SK-N-SH (cell line): ENCODE measurements at regions of chr2 and their contacts with region 1.

Region 1: GRCh38 chr2:30711646-30712085 is 95.6 kb downstream of the CAPN13 start:
- DNase-seq: peak; percentile 86
- H3K4me3 ChIP-seq: peak overlapping the region in 1 of 2 experiments; percentile 14; a peak in 1 of 4 replicates
- H3K27ac ChIP-seq: no peak overlapping the region
- H3K4me1 ChIP-seq: peaks cover 0 to 3% of the 10 kb centered on the region in 2 experiments; a peak in 1 of 4 replicates
- H3K27me3 ChIP-seq: no peaks in the 10 kb centered on the region
- CTCF ChIP-seq: peak; percentile 99
- EP300 ChIP-seq: no peak
- RAD21 ChIP-seq: peak; percentile 91

Region 2: GRCh38 chr2:30146438-30147147 is 565.1 kb before region 1 on chr2 and contains the start of gene YPEL5:
- CTCF ChIA-PET with region 1: interaction called, 18 read pairs
- POLR2A ChIA-PET with region 1: no interaction called
- DNase-seq: peak; percentile 99
- H3K4me3 ChIP-seq: peak within 1 kb of the TSS; percentile 82 to 99
- H3K27ac ChIP-seq: peak within 1 kb of the TSS; percentile 86 to 91
- H3K4me1 ChIP-seq: peaks cover 26 to 37% of the 10 kb centered on the region in 2 experiments; a peak in 3 of 4 replicates
- H3K27me3 ChIP-seq: no peaks in the 10 kb centered on the region
- CTCF ChIP-seq: no peak
- EP300 ChIP-seq: no peak
- RAD21 ChIP-seq: no peak
- polyA plus RNA-seq, gene YPEL5: 60.5 and 81.6 TPM in 2 replicates

Region 3: DNA sequence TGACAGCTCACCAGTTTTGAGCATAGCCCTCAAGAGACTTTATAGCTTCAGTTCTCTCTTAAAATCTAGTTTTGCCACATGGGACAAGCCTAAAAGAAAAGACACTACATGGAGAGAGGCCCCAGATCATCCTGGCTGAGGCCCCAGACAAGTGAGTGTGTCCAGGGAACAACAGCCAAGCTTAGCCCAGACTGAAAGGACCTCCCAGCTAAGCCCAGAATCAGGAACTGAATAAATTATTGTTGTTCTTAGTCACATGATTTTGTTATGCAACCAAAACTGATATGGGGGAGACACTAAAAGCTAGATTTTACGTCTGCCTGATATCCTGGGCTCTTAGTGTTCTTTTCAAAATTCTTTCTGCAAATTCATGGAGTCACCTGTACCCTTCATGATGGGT is 509.7 kb before region 1 on chr2:
- CTCF ChIA-PET with region 1: interaction called, 573 read pairs
- POLR2A ChIA-PET with region 1: no interaction called
- DNase-seq: no peak
- H3K4me3 ChIP-seq: no peak overlapping the region
- H3K27ac ChIP-seq: no peak overlapping the region
- H3K4me1 ChIP-seq: peaks cover 0 to 11% of the 10 kb centered on the region in 2 experiments; a peak in 2 of 4 replicates
- H3K27me3 ChIP-seq: no peaks in the 10 kb centered on the region; the same call in 1 of the 2 replicates
- CTCF ChIP-seq: no peak
- EP300 ChIP-seq: no peak
- RAD21 ChIP-seq: no peak

Region 4: GRCh38 chr2:30334762-30335363 is 376.8 kb before region 1 on chr2:
- CTCF ChIA-PET with region 1: interaction called, 30 read pairs
- POLR2A ChIA-PET with region 1: no interaction called
- DNase-seq: peak; percentile 42
- H3K4me3 ChIP-seq: no peak overlapping the region
- H3K27ac ChIP-seq: no peak overlapping the region
- H3K4me1 ChIP-seq: peaks cover 0 to 11% of the 10 kb centered on the region in 2 experiments; a peak in 1 of 4 replicates
- H3K27me3 ChIP-seq: no peaks in the 10 kb centered on the region
- CTCF ChIP-seq: no peak
- EP300 ChIP-seq: peak in 1 of 2 experiments; percentile 25; a peak in 1 of 4 replicates
- RAD21 ChIP-seq: peak; percentile 54

Region 5: DNA sequence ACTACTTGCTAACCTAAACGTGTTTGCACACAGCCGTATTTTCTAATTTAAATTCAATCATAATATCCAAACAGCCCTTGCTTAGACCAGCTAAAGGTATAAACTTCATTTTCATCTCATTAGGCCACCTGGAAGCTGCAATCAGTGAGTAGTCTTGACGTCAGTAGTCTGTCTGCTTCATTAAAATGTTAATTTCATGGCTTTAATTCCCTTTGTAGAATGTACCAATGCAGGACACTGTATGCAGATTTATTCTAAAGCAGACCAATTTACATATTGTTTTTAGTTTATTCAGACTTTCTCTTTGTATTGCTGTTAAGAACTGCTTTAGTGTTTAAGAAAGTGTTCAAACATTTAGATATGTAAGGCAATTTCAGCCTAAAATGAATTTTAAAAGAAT is 106.5 kb before region 1 on chr2:
- CTCF ChIA-PET with region 1: no interaction called
- POLR2A ChIA-PET with region 1: no interaction called
- DNase-seq: no peak
- H3K4me3 ChIP-seq: no peak overlapping the region
- H3K27ac ChIP-seq: no peak overlapping the region
- H3K4me1 ChIP-seq: peaks cover 0 to 6% of the 10 kb centered on the region in 2 experiments; a peak in 2 of 4 replicates
- H3K27me3 ChIP-seq: no peaks in the 10 kb centered on the region
- CTCF ChIP-seq: no peak
- EP300 ChIP-seq: no peak
- RAD21 ChIP-seq: no peak

Region 6: GRCh38 chr2:30641765-30642345 is 69.8 kb before region 1 on chr2:
- CTCF ChIA-PET with region 1: no interaction called
- POLR2A ChIA-PET with region 1: no interaction called
- DNase-seq: no peak
- H3K4me3 ChIP-seq: no peak overlapping the region
- H3K27ac ChIP-seq: no peak overlapping the region
- H3K4me1 ChIP-seq: no peaks in the 10 kb centered on the region; a peak in 1 of 4 replicates
- H3K27me3 ChIP-seq: no peaks in the 10 kb centered on the region
- CTCF ChIP-seq: no peak
- EP300 ChIP-seq: no peak
- RAD21 ChIP-seq: no peak

Region 7: GRCh38 chr2:30770816-30771576 is 59.3 kb after region 1 on chr2:
- CTCF ChIA-PET with region 1: interaction called, 13 read pairs
- POLR2A ChIA-PET with region 1: no interaction called
- DNase-seq: peak; percentile 79
- H3K4me3 ChIP-seq: no peak overlapping the region
- H3K27ac ChIP-seq: peak overlapping the region in 1 of 2 experiments; percentile 64; a peak in 2 of 4 replicates
- H3K4me1 ChIP-seq: peaks cover 0 to 38% of the 10 kb centered on the region in 2 experiments; a peak in 2 of 4 replicates
- H3K27me3 ChIP-seq: no peaks in the 10 kb centered on the region
- CTCF ChIP-seq: no peak
- EP300 ChIP-seq: peak in 1 of 2 experiments; percentile 94; a peak in 2 of 4 replicates
- RAD21 ChIP-seq: peak; percentile 3; the same call in 1 of the 2 replicates

Region 8: DNA sequence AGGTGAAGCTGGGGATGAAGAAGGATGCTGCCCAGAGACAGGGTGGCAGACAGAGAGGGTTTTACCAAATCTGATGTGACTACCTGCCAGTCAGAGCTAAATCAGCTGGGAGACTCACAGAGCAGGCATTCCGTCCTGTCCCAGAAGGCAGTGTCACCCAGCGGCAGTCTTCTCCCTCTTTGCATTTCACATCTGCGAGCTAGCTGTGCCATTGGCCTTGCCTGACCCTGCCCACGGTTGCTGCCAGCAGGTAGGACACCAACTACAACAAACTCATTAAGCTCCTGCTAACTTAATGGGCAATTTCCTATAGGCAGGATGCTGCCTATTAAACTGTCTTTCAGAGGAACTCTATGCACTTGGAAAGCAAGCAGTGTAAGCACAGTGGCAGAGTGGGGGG is 211.9 kb after region 1 on chr2:
- CTCF ChIA-PET with region 1: interaction called, 10 read pairs
- POLR2A ChIA-PET with region 1: no interaction called
- DNase-seq: no peak
- H3K4me3 ChIP-seq: no peak overlapping the region
- H3K27ac ChIP-seq: no peak overlapping the region
- H3K4me1 ChIP-seq: peaks cover 0 to 7% of the 10 kb centered on the region in 2 experiments; a peak in 1 of 4 replicates
- H3K27me3 ChIP-seq: no peaks in the 10 kb centered on the region
- CTCF ChIP-seq: no peak
- EP300 ChIP-seq: no peak
- RAD21 ChIP-seq: no peak

Region 9: GRCh38 chr2:31233741-31234682 is 522.3 kb after region 1 on chr2 and contains the start of gene EHD3:
- CTCF ChIA-PET with region 1: interaction called, 13 read pairs
- POLR2A ChIA-PET with region 1: no interaction called
- DNase-seq: peak; percentile 98
- H3K4me3 ChIP-seq: peak within 1 kb of the TSS; percentile 74 to 89
- H3K27ac ChIP-seq: peak within 1 kb of the TSS; percentile 19 to 92; a peak in 3 of 4 replicates
- H3K4me1 ChIP-seq: peaks cover 15 to 42% of the 10 kb centered on the region in 2 experiments; a peak in 3 of 4 replicates
- H3K27me3 ChIP-seq: no peaks in the 10 kb centered on the region
- CTCF ChIP-seq: peak; percentile 85
- EP300 ChIP-seq: peak in 1 of 2 experiments; percentile 24; a peak in 2 of 4 replicates
- RAD21 ChIP-seq: peak; percentile 80
- polyA plus RNA-seq, gene EHD3: 45.3 and 45.4 TPM in 2 replicates